Activated T-helper 2 cell treated with anti-CD3 and anti-CD28 coated beads, Interferon-gamma antibody, Interleukin-2, Interleukin-4, amounts not matched to agents 10 μg/mL and 5 μg/mL and 100 μg/mL, durations not matched to agents 14 hours and 24 hours and 36 hours (primary cell): ENCODE measurements at regions of chr13 and their contacts with region 1.

Region 1: DNA sequence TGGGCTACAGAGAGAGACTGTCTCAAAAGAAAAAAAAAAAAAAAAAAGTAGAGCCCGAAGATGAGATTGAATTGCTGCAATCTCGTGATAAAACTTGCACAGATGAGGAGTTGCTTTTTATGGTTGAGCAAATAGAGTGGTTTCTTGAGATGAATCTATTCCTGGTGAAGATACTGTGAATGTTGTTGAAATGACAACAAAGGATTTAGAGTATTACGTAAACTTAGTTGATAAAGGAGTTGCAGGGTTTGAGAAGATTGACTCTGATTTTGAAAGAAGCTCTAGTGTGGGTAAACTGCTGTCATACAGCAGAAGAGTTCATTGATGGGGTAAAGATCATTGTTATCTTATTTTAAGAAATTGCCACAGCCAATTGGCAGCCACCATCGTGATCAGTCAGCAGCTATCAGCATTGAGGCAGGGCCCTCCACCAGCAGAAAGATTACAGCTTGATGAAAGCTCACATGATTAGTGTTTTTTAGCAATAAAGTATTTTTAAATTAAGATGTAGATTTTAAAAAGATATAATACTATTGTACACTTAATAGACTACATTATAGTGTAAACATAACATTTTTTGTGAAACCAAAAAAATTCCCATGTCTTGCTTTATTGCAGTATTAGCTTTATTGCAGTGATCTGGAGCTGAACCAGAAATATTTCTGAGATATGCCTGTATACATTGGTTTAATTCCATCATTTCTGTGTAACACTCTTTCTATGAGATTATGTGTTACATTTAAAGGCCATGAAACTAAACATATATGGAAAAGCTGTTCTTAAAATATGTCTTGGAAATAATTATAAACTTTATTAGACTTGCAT is 43.1 kb downstream of the ZMYM2 start:
- DNase-seq: no peak
- H3K4me3 Mint-ChIP-seq: no peak overlapping the region
- H3K27ac Mint-ChIP-seq: peak overlapping the region; percentile 7
- H3K4me1 Mint-ChIP-seq: peaks cover 35% of the 10 kb centered on the region
- H3K27me3 Mint-ChIP-seq: no peaks in the 10 kb centered on the region

Region 2: DNA sequence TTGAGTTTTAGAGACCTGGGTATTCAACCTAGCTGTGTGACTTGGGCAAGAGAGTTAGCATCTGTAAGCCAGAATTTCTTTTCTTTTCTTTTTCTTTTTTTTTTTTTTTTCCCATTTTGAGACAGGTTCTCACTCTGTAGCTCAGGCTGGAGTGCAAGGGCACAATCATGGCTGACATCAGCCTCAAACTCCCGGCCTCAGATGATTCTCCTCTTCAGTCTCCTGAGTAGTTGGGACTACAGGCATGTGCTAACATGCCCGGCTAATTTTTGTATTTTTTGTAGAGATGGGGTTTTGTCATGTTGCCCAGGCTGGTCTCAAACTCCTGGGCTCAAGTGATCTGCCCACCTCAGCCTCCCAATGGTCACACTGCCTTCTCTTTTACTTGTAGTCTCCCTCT is 10.0 kb before region 1 on chr13:
- intact Hi-C with region 1: no loop called
- DNase-seq: no peak
- H3K4me3 Mint-ChIP-seq: no peak overlapping the region
- H3K27ac Mint-ChIP-seq: peak overlapping the region; percentile 35
- H3K4me1 Mint-ChIP-seq: peaks cover 28% of the 10 kb centered on the region
- H3K27me3 Mint-ChIP-seq: no peaks in the 10 kb centered on the region

Region 3: GRCh38 chr13:20019043-20019442 is 17.5 kb after region 1 on chr13:
- intact Hi-C with region 1: loop called (anchors 2 kb)
- DNase-seq: no peak
- H3K4me3 Mint-ChIP-seq: no peak overlapping the region
- H3K27ac Mint-ChIP-seq: no peak overlapping the region
- H3K4me1 Mint-ChIP-seq: peaks cover 13% of the 10 kb centered on the region
- H3K27me3 Mint-ChIP-seq: no peaks in the 10 kb centered on the region